Gastrocnemius medialis (tissue), 4 donors: ENCODE measurements at regions of chr17 and their contacts with region 1.

Region 1: DNA sequence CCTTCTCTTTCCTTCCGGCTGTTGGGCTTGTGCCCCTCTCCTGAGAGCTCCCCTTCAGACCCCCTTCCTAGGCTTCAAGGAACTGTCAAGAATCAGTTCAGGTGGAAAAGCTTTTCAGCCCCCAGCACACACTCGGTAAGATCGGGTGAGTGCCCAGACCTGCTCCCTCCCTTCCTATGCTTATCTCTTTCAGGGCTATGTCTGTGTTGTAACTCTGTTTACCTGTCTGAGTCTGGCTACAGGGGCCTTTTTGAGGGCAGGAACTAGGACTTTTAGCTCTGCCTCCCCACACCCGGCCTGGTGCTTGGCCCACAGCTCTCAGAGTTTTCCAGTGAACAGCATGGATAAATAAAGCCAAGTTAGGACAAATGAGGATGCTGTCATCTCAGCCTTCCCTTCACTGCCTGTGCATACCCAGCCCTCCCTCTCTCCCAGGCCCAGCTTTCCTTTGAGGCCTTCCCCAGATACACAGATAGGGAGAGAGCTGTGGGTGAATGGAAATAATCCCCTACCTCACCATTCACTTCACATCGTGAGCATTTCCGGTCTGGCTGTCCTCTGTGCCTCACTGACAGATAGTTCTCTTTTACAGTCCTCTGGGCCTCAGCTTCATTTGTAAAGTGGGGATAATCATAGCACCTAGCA is 5.7 kb upstream of the MRPS23 start:
- DNase-seq: no peak
- ATAC-seq: no peak
- H3K4me3 ChIP-seq: no peak overlapping the region
- H3K27ac ChIP-seq: peak overlapping the region; percentile 91 to 98 (median 96)
- H3K4me1 ChIP-seq: peaks cover 38 to 46% of the 10 kb centered on the region in 2 donors
- H3K27me3 ChIP-seq: no peaks in the 10 kb centered on the region
- CTCF ChIP-seq: no peak
- POLR2A ChIP-seq: no peak

Region 2: DNA sequence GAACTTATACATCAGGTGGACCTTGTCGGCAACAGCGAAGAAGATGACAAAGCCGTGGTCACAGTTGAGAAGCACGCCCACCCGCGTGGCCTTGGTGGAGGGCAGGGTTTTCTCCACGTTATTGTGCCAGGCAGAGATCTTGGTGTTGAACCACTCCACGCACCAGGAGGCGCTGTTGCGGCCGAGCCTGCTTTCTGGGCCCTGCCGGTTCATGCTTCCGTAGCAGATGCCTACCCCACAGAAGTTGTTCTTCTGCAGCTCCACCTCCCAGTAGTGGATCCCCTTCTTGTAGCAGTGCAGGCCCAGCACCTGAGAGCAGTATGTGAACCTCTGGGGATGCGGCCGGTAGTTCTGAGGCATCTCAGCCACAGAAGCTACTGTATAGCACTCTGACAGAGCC is 963.7 kb before region 1 on chr17:
- in situ Hi-C with region 1: no loop called
- intact Hi-C with region 1: no loop called
- DNase-seq: no peak
- ATAC-seq: no peak
- H3K4me3 ChIP-seq: no peak overlapping the region
- H3K27ac ChIP-seq: no peak overlapping the region
- H3K4me1 ChIP-seq: no peaks in the 10 kb centered on the region
- H3K27me3 ChIP-seq: no peaks in the 10 kb centered on the region
- CTCF ChIP-seq: peak in 4 of 5 experiments; percentile 14 to 50 (median 40)
- POLR2A ChIP-seq: no peak

Region 3: DNA sequence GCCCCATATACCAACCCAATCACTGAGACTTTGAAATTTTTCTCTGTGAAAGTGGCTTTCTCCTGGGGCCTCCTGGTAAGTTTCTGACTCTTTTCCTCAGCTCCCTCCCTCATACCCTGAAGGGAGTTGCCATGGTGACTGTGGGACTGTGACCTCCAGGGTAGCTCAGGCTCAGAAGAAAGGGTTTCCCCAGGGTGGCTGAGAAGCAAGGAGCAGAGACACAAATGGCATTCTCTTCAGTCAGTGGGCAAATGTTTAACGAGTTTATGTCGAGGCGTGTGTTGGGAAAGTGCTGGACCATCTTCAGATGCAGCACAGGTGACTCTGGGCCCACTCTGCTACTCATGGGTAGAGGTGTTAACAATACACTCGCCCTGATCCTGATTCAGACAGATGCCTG is 52.5 kb before region 1 on chr17:
- in situ Hi-C with region 1: no loop called
- intact Hi-C with region 1: no loop called
- DNase-seq: no peak
- ATAC-seq: no peak
- H3K4me3 ChIP-seq: no peak overlapping the region
- H3K27ac ChIP-seq: no peak overlapping the region
- H3K4me1 ChIP-seq: peaks cover 0 to 3% of the 10 kb centered on the region in 2 donors
- H3K27me3 ChIP-seq: no peaks in the 10 kb centered on the region
- CTCF ChIP-seq: no peak
- POLR2A ChIP-seq: no peak

Region 4: GRCh38 chr17:57995076-57995956 is 139.8 kb after region 1 on chr17:
- in situ Hi-C with region 1: loop called (anchors 5 kb)
- intact Hi-C with region 1: loop called (anchors 1 kb)
- DNase-seq: peak; percentile 80 to 93
- ATAC-seq: peak; percentile 92 to 93
- H3K4me3 ChIP-seq: no peak overlapping the region
- H3K27ac ChIP-seq: peak overlapping the region; percentile 79 to 99 (median 98)
- H3K4me1 ChIP-seq: peaks cover 63 to 70% of the 10 kb centered on the region in 2 donors
- H3K27me3 ChIP-seq: no peaks in the 10 kb centered on the region
- CTCF ChIP-seq: peak; percentile 61 to 84 (median 75)
- POLR2A ChIP-seq: no peak

Region 5: GRCh38 chr17:58119491-58119890 is 264.0 kb after region 1 on chr17:
- in situ Hi-C with region 1: loop called in 3 of 4 experiments (anchors 5 to 10 kb)
- intact Hi-C with region 1: no loop called
- DNase-seq: no peak
- ATAC-seq: no peak
- H3K4me3 ChIP-seq: no peak overlapping the region
- H3K27ac ChIP-seq: no peak overlapping the region
- H3K4me1 ChIP-seq: no peaks in the 10 kb centered on the region
- H3K27me3 ChIP-seq: no peaks in the 10 kb centered on the region
- CTCF ChIP-seq: no peak
- POLR2A ChIP-seq: no peak